ENCODE measurements at regions of chr6 and their contacts with region 1.

Region 1: DNA sequence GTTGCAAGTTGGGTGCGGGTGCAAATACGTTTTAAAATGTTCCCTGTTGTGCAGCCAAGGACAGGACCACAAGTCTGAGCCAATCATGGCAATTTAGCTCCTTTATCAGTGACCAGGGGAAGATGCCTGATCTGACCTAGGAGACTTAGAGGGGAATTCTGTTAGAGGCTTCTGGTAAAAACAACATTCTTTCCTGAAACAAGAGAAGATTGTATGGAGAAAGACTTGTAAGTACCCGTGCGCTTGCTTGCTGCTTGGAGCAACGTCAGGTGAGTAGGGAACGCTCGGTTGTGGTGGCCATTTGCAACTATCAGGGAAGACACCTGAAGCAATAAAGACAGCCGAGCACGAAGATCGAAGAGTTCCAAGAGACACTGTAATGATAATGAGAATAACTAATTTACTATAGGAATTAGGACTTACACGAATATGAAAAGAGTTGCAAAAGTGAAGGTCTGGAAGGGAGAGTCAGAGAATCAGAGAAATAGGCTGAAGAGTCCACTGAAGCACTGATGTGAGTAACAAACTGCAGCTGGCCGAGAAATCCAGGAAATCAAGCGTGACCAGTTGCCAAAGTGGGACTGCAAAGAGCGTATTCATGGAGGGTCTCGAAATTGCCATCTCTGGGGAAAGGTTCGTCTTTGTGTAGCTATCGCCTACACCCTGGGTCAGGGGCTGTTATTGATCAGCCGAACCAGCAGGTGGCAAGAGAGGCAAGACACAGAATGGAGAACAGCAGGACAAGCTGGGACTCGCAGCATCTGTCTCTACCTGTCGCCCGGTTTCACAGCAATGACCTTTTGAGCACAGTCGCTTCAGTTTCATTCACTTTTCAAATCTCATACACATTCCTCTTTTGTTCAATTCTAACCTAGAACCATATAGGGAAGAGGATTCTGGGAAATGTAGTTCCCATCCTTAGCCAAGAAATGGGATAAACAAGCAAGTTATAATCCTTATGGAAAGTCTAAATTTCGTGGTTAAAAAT is 26.1 kb downstream of the LOC128125822 start:
- DNase-seq: peak; percentile 69
- H3K4me3 ChIP-seq: peak overlapping the region; percentile 47 to 57 (median 54)
- H3K27ac ChIP-seq: no peak overlapping the region
- H3K4me1 ChIP-seq: peaks cover 9% of the 10 kb centered on the region
- H3K27me3 ChIP-seq: no peaks in the 10 kb centered on the region
- CTCF ChIP-seq: peak; percentile 89 to 90

Region 2: GRCh38 chr6:63307581-63308246 is 290.6 kb before region 1 on chr6:
- CTCF ChIA-PET with region 1: no interaction called
- dilution Hi-C with region 1: no loop called
- in situ Hi-C with region 1: no loop called
- intact Hi-C with region 1: loop called (anchors 5 kb)
- DNase-seq: peak; percentile 37
- H3K4me3 ChIP-seq: no peak overlapping the region
- H3K27ac ChIP-seq: no peak overlapping the region
- H3K4me1 ChIP-seq: no peaks in the 10 kb centered on the region
- H3K27me3 ChIP-seq: no peaks in the 10 kb centered on the region
- CTCF ChIP-seq: peak; percentile 50 to 59

Region 3: DNA sequence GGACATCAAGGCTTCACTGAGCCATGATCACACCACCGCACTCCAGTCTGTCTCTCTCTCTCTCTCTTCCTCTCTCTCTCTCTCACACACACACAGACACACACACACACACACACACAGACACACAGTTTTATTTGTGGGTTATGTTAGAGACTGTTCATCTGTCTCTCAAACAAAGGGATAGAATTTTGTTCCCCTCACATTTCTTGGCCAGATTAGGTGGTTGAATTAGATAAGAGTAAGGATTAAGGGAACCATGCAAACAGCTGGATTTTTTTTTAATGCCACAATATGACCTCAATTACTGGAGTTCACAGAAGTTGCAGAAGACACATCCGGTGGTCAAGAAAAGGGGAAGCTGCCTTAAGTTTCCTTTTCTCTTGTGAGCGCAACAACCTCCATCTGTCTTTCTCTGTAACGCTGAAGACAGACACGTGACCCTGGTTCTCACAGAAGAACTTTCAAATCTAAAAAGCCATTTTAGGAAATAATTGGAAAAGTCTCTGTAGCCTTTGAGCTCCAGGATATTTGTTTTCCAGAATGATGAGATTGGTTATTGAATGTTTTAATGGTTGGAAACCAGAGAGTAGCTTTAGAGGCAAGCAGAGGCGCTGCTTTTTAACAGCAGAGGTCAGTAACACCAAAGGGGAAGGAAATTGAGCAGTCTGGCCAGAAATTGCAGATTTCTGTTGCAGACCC is 245.6 kb before region 1 on chr6:
- CTCF ChIA-PET with region 1: interaction called, 4 read pairs
- dilution Hi-C with region 1: no loop called
- in situ Hi-C with region 1: loop called (anchors 10 kb)
- intact Hi-C with region 1: loop called (anchors 1 kb)
- DNase-seq: peak; percentile 22
- H3K4me3 ChIP-seq: no peak overlapping the region
- H3K27ac ChIP-seq: no peak overlapping the region
- H3K4me1 ChIP-seq: peaks cover 10% of the 10 kb centered on the region
- H3K27me3 ChIP-seq: no peaks in the 10 kb centered on the region
- CTCF ChIP-seq: peak; percentile 68 to 76

Region 4: GRCh38 chr6:63635588-63636517 is 37.5 kb after region 1 on chr6 and contains the start of gene PHF3:
- CTCF ChIA-PET with region 1: interaction called, 3 read pairs
- dilution Hi-C with region 1: no loop called
- in situ Hi-C with region 1: no loop called
- intact Hi-C with region 1: loop called (anchors 1 kb)
- DNase-seq: peak; percentile 85
- H3K4me3 ChIP-seq: peak within 1 kb of the TSS; percentile 89 to 94 (median 92)
- H3K27ac ChIP-seq: peak within 1 kb of the TSS; percentile 78
- H3K4me1 ChIP-seq: peaks cover 14% of the 10 kb centered on the region
- H3K27me3 ChIP-seq: no peaks in the 10 kb centered on the region
- CTCF ChIP-seq: peak in 1 of 2 donors; percentile 36
- total RNA-seq, gene PHF3: 35.2 to 41.5 TPM

Region 5: GRCh38 chr6:63689421-63689820 is 91.1 kb after region 1 on chr6:
- CTCF ChIA-PET with region 1: no interaction called
- dilution Hi-C with region 1: no loop called
- in situ Hi-C with region 1: no loop called
- intact Hi-C with region 1: no loop called
- DNase-seq: no peak
- H3K4me3 ChIP-seq: no peak overlapping the region
- H3K27ac ChIP-seq: no peak overlapping the region
- H3K4me1 ChIP-seq: no peaks in the 10 kb centered on the region
- H3K27me3 ChIP-seq: no peaks in the 10 kb centered on the region
- CTCF ChIP-seq: no peak

Region 6: DNA sequence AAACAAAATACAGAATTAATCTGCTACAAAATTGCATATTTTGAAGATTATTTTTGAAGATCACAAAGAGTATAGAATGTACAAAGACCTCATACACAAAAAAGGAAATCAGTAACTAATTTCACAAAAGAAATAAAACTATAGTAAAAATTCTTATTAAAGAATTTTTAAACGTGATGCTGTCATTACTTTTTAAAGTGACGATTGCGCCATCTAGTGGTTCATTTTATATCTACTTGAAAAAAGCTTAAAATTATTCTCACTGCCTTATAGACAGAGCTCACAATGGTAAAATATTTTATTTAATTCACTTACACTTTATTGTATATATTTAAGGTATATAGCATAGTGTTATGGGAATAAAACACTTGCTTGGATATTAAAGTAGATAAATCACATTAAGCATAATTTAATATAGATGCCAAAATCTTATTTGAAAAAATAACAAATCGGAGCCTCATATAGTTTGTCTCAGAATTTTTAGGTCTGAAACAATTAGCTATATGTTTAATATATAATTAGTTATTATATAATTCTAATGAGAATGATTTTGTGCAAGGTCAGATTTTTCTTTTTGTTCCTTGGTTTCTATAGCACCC is 166.1 kb after region 1 on chr6:
- CTCF ChIA-PET with region 1: interaction called, 9 read pairs
- dilution Hi-C with region 1: loop called (anchors 25 kb)
- in situ Hi-C with region 1: loop called (anchors 10 kb)
- intact Hi-C with region 1: loop called (anchors 1 kb)
- DNase-seq: no peak
- H3K4me3 ChIP-seq: no peak overlapping the region
- H3K27ac ChIP-seq: no peak overlapping the region
- H3K4me1 ChIP-seq: no peaks in the 10 kb centered on the region
- H3K27me3 ChIP-seq: no peaks in the 10 kb centered on the region
- CTCF ChIP-seq: peak; percentile 15 to 37

Region 7: GRCh38 chr6:63802606-63803206 is 204.4 kb after region 1 on chr6:
- CTCF ChIA-PET with region 1: interaction called, 10 read pairs
- dilution Hi-C with region 1: no loop called
- in situ Hi-C with region 1: no loop called
- intact Hi-C with region 1: loop called (anchors 2 kb)
- DNase-seq: no peak
- H3K4me3 ChIP-seq: no peak overlapping the region
- H3K27ac ChIP-seq: no peak overlapping the region
- H3K4me1 ChIP-seq: peaks cover 39% of the 10 kb centered on the region
- H3K27me3 ChIP-seq: no peaks in the 10 kb centered on the region
- CTCF ChIP-seq: peak; percentile 71

Measured in mammary epithelial cell (primary cell).